HCT116 (cell line): ENCODE measurements at regions of chr19 and their contacts with region 1.

Region 1: GRCh38 chr19:5690125-5690954 is at the start of gene RPL36:
- DNase-seq: peak; percentile 92
- ATAC-seq: peak; percentile 46
- H3K4me3 ChIP-seq: peak within 1 kb of the TSS; percentile 85 to 99
- H3K27ac ChIP-seq: peak within 1 kb of the TSS; percentile 93
- H3K4me1 ChIP-seq: peaks cover 11 to 48% of the 10 kb centered on the region in 2 experiments; a peak in 3 of 4 replicates
- H3K27me3 ChIP-seq: no peaks in the 10 kb centered on the region
- CTCF ChIP-seq: peak; percentile 83 to 96 (median 89)
- POLR2A ChIP-seq: peak; percentile 95
- RAD21 ChIP-seq: no peak
- total RNA-seq, gene RPL36: 1,504 TPM

Region 2: DNA sequence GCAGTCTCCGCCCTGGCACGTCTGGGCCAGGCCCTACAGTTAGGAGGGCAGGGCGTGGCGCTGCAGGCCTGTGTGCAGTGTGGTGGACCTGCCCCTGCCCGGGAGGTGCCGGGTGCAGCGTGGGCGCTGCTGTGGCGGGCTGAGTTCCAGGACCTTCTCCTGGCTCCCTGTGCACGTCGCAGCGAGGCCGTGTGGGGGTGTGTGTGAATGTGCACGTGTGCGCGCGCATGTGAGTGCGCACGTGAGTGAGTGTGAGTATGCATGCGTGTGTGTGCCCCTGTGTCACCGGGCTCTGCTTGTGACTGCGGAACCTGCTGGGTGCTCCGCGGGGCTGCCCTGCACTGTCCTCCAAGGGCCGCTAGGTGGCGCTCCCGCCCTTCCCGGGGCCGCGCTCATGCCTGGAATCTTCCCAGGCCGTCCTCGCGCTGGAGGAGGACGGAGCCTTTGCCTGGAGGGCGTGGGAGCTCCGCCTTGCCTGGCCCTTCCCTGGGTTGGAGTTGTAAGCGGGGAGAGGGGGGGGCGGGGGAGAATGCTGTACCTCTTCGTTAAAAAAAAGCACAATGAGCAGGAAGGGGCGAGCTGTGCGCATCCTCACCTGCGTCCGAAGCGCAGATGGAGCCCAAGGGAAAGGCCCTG is 642.1 kb before region 1 on chr19:
- CTCF ChIA-PET with region 1: no interaction called
- POLR2A ChIA-PET with region 1: no interaction called
- RAD21 ChIA-PET with region 1: no interaction called
- intact Hi-C with region 1: loop called (anchors 5 kb)
- DNase-seq: no peak
- ATAC-seq: peak; percentile 94
- H3K4me3 ChIP-seq: no peak overlapping the region
- H3K27ac ChIP-seq: no peak overlapping the region; the same call in 1 of the 2 replicates
- H3K4me1 ChIP-seq: peaks cover 19 to 35% of the 10 kb centered on the region in 2 experiments
- H3K27me3 ChIP-seq: no peaks in the 10 kb centered on the region
- CTCF ChIP-seq: peak; percentile 63 to 95 (median 91); a peak in 5 of 6 replicates
- POLR2A ChIP-seq: no peak
- RAD21 ChIP-seq: peak; percentile 93

Region 3: DNA sequence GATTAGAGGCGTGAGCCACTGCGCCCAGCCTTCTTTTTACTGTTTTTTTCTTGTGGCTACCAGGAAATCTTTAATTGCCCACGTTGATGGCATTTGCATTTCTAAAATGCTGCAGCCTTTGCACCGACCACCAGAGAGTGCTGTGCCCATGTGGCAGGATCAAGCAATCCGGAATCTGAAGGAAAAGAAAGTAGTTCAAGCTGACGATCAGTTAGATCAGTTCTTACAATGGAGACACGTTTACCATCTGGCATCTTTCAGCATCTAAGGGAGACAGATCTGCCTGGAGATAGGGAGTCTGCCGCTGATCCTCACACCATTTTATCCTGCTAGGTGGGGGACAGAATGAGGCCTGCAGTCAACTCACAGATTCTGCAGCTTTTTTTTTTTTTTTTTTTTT is 142.5 kb before region 1 on chr19:
- CTCF ChIA-PET with region 1: interaction called, 8 read pairs
- POLR2A ChIA-PET with region 1: interaction called, 5 read pairs
- RAD21 ChIA-PET with region 1: no interaction called
- intact Hi-C with region 1: loop called (anchors 5 kb)
- DNase-seq: no peak
- ATAC-seq: peak; percentile 78
- H3K4me3 ChIP-seq: no peak overlapping the region
- H3K27ac ChIP-seq: no peak overlapping the region
- H3K4me1 ChIP-seq: peaks cover 0 to 7% of the 10 kb centered on the region in 2 experiments; a peak in 1 of 4 replicates
- H3K27me3 ChIP-seq: no peaks in the 10 kb centered on the region
- CTCF ChIP-seq: peak; percentile 78 to 79 (median 78)
- POLR2A ChIP-seq: no peak
- RAD21 ChIP-seq: peak; percentile 89

Region 4: DNA sequence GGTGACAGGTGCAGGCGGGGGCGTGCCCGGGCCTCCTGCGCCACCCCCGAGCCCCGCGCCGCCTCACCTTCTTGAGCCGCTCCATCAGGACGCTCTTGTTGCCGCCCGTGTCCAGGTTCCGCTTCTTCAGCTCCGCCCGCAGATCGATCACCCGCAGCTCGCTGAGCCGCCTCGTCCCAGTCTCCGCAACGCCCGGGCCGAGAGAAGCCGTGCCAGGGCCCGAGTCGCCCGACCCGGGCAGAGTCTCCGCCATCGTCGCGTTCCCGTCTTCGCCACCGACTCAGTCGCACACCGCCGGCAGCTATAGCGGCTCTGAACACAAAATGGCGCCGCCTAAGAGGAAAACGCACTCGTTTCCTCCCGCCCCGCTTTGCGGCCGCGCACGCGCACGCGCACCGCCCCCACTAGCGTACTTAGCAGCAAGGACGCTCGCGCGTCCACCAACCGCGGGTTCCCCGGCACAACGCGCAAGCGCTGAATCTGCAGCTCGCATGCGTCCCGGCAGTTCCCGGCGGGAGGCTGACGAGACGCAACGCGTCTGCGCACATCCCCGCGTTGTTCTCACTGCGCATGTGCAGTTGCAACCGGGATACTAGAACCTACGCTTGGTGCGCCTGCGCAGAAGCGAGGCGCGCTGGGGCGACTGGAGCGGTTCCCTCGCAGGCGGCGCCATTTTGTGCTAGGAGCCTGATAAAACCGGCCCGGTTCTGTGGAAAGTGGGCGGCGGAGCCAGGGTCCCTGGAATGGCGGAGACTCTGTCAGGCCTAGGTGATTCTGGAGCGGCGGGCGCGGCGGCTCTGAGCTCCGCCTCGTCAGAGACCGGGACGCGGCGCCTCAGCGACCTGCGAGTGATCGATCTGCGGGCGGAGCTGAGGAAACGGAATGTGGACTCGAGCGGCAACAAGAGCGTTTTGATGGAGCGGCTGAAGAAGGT is 67.6 kb before region 1 on chr19 and contains the starts of genes SAFB and SAFB2:
- CTCF ChIA-PET with region 1: interaction called, 8 read pairs
- POLR2A ChIA-PET with region 1: interaction called, 13 read pairs
- RAD21 ChIA-PET with region 1: interaction called in 1 of 2 experiments, 3 read pairs
- intact Hi-C with region 1: no loop called
- DNase-seq: peak; percentile 99
- ATAC-seq: peak; percentile 96
- H3K4me3 ChIP-seq: peak within 1 kb of the TSS; percentile 87 to 97
- H3K27ac ChIP-seq: peak within 1 kb of the TSS; percentile 92
- H3K4me1 ChIP-seq: peaks cover 14 to 24% of the 10 kb centered on the region in 2 experiments; a peak in 3 of 4 replicates
- H3K27me3 ChIP-seq: no peaks in the 10 kb centered on the region
- CTCF ChIP-seq: no peak
- POLR2A ChIP-seq: peak; percentile 95
- RAD21 ChIP-seq: no peak
- total RNA-seq, gene SAFB: 143 TPM
- total RNA-seq, gene SAFB2: 86.9 TPM

Region 5: DNA sequence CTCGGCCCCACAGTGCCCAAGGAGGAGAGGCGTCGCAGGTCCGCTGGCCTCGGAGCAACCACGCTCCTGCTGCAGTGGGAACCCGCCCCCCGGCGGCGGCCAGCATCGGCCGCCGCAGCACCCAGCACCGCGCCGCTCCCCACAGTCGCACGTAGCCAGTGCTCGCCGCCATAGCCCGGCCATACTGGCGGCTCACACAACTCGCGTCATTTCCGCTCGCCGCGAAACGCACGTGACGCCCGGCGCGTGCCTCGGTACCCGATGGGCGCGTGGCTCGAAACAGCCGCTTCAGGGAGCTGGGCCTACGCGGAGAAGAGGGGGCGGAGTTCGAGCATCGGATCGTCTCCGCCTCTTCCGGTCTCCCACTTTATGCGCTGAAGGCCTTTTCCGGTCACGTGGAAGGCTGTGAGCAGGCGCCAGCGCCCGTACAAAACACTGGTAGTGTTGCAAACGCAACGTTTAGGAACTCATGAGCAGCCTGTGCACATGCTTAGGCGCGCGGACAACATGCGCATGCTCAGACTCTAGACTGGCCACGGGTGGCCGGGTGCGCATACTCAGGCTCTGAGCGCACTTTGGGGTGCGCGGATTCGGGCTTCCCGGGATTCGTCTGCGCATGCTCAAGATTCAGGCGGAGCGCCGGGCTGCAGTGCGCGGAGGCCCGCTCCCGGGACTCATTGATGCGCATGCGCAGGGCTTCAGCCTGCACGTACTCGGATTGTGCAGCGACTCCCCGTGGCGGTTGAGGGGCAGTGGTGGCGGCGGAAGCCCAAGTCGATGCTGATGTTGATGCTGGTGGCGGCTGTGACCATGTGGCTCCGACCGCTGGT is 29.8 kb after region 1 on chr19 and contains the starts of genes CATSPERD and LONP1:
- CTCF ChIA-PET with region 1: interaction called, 9 read pairs
- POLR2A ChIA-PET with region 1: interaction called, 31 read pairs
- RAD21 ChIA-PET with region 1: interaction called in 1 of 2 experiments, 4 read pairs
- intact Hi-C with region 1: no loop called
- DNase-seq: peak; percentile 97
- ATAC-seq: peak; percentile 92
- H3K4me3 ChIP-seq: peak within 1 kb of the TSS; percentile 99 to 100
- H3K27ac ChIP-seq: peak within 1 kb of the TSS; percentile 85
- H3K4me1 ChIP-seq: peaks cover 10 to 28% of the 10 kb centered on the region in 2 experiments
- H3K27me3 ChIP-seq: no peaks in the 10 kb centered on the region
- CTCF ChIP-seq: peak; percentile 62 to 92 (median 88)
- POLR2A ChIP-seq: peak; percentile 67
- RAD21 ChIP-seq: no peak
- total RNA-seq, gene CATSPERD: not detected
- total RNA-seq, gene LONP1: 180 TPM

Region 6: GRCh38 chr19:5790573-5791520 is 100.5 kb after region 1 on chr19 and contains the start of gene DUS3L:
- CTCF ChIA-PET with region 1: interaction called, 7 read pairs
- POLR2A ChIA-PET with region 1: interaction called, 6 read pairs
- RAD21 ChIA-PET with region 1: no interaction called
- intact Hi-C with region 1: loop called (anchors 2 kb)
- DNase-seq: peak; percentile 97
- ATAC-seq: peak; percentile 91
- H3K4me3 ChIP-seq: peak within 1 kb of the TSS; percentile 72 to 85
- H3K27ac ChIP-seq: peak within 1 kb of the TSS; percentile 96
- H3K4me1 ChIP-seq: peaks cover 9 to 22% of the 10 kb centered on the region in 2 experiments; a peak in 3 of 4 replicates
- H3K27me3 ChIP-seq: no peaks in the 10 kb centered on the region
- CTCF ChIP-seq: no peak
- POLR2A ChIP-seq: peak; percentile 97
- RAD21 ChIP-seq: no peak
- total RNA-seq, gene DUS3L: 78.1 TPM

Region 7: DNA sequence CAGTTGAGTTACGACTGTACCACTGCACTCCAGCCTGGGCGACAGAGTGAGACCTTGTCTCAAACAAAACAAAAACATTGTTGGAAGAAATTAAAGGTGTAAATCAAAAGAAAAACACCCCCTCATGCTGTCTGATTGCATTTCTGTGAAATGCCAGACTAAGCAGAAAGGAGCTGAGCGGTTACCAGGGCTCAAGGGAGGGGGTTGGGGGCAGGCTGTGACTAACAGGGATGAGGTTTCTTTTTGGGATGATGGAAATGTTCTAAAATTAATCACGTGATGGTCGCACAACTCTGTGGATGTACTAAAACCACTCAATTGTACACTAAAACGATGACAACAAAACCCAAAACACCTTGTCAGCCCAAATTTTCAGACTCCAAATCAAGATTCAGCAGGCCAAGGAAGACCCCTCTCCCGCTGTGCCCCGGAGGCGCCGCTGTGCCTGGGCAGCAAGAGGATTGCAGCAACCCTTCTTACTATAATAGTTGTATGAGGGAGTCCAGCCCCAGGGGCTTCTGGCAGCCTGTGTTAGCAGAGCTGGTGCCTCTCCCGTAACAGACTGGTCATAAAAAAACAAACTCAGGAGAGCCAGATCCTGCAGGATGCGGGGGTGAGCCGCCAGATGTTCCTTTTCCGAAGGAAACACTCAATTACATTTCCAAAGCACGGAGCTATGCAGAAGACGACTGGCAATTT is 244.6 kb after region 1 on chr19:
- CTCF ChIA-PET with region 1: no interaction called
- POLR2A ChIA-PET with region 1: no interaction called
- RAD21 ChIA-PET with region 1: no interaction called
- intact Hi-C with region 1: no loop called
- DNase-seq: no peak
- ATAC-seq: no peak
- H3K4me3 ChIP-seq: no peak overlapping the region
- H3K27ac ChIP-seq: no peak overlapping the region
- H3K4me1 ChIP-seq: no peaks in the 10 kb centered on the region
- H3K27me3 ChIP-seq: no peaks in the 10 kb centered on the region
- CTCF ChIP-seq: no peak
- POLR2A ChIP-seq: no peak
- RAD21 ChIP-seq: no peak